Psoas muscle (tissue), 8 donors: ENCODE measurements at regions of chr15 and their contacts with region 1.

Region 1: DNA sequence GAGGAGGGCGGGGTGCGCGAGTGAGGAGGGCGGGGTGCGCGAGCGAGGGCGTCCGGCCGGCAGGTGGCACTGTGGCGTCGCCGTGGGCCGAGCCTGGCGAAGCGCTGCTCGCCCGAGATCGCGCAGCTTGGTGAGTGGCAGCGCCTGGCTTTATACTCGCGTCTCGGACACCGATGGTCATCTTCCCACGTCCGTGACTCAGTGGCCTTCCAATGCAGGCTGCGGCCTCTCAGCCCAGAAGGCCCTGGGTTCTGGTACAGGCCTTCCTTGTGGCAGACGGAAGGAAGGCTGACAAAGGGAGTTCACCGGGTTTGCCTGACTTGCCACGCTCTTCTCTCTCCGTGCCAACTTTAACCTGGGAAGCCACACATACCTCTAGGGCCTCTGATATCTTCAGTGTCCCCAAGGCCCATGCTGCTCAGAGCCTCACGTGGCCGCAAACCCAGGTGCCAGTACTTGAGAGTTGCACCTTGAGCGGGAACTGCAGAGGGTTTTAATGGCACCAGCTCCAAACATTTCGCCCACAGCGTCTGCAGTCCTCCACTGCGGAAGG is 195.3 kb upstream of the LYSMD4 start:
- DNase-seq: peak; percentile 76 to 93
- ATAC-seq: peak; percentile 88 to 98 (median 97)
- H3K4me3 ChIP-seq: peak overlapping the region; percentile 68
- H3K27ac ChIP-seq: peak overlapping the region; percentile 66
- H3K4me1 ChIP-seq: no peaks in the 10 kb centered on the region
- H3K27me3 ChIP-seq: no peaks in the 10 kb centered on the region
- CTCF ChIP-seq: peak; percentile 68

Region 2: DNA sequence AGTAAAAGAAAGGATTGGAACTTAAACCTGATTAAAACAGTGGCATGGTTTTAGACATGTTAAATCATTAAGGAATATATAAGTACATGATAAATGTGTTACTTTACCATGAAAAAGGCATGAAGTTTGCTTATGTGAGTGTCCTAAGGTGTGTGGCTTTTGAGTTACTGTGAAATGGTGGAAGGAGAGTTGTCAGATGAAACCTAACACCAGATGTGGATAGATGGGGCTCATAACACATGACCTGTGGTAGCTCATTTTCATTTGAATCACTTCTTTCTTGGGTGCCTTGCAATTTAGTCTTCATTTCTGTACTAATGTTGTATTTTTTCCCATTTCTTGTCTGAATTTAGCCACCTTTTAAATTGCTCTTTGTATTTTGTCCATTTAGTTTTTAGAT is 349.7 kb before region 1 on chr15:
- intact Hi-C with region 1: no loop called
- DNase-seq: no peak
- ATAC-seq: peak; percentile 40 to 70 (median 56)
- H3K4me3 ChIP-seq: peak overlapping the region; percentile 23
- H3K27ac ChIP-seq: peak overlapping the region; percentile 62
- H3K4me1 ChIP-seq: peaks cover 82% of the 10 kb centered on the region
- H3K27me3 ChIP-seq: no peaks in the 10 kb centered on the region
- CTCF ChIP-seq: no peak

Region 3: GRCh38 chr15:99863550-99864198 is 64.8 kb before region 1 on chr15:
- intact Hi-C with region 1: loop called in 1 of 2 experiments (anchors 10 kb)
- DNase-seq: no peak
- ATAC-seq: no peak
- H3K4me3 ChIP-seq: no peak overlapping the region
- H3K27ac ChIP-seq: no peak overlapping the region
- H3K4me1 ChIP-seq: no peaks in the 10 kb centered on the region
- H3K27me3 ChIP-seq: no peaks in the 10 kb centered on the region
- CTCF ChIP-seq: no peak

Region 4: DNA sequence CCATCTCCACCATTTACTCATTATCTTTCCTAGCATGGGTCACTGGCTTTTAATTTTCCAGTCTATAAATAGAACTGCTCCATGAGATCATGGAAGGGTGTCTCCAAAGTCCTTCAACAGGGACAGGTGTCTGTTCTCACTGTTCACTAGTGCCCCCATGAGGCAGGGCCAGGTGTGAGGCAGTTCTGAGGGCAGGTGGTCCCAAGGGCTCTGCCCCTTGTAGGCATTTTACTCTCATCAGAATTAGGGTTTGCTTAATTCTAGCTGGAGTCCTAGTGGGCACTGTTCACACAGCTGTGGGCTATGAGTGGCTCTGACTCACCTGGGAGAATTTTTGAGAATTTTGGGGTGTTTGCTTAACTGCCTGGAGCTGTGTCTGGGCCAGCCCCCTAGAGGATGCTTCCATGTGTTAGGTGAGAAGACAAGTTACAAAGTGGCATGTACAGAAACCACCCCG is 52.7 kb after region 1 on chr15:
- intact Hi-C with region 1: loop called in 1 of 2 experiments (anchors 5 kb)
- DNase-seq: peak in 1 of 2 donors; percentile 31
- ATAC-seq: peak; percentile 36 to 73 (median 67)
- H3K4me3 ChIP-seq: no peak overlapping the region
- H3K27ac ChIP-seq: no peak overlapping the region
- H3K4me1 ChIP-seq: no peaks in the 10 kb centered on the region
- H3K27me3 ChIP-seq: no peaks in the 10 kb centered on the region
- CTCF ChIP-seq: peak; percentile 43

Region 5: DNA sequence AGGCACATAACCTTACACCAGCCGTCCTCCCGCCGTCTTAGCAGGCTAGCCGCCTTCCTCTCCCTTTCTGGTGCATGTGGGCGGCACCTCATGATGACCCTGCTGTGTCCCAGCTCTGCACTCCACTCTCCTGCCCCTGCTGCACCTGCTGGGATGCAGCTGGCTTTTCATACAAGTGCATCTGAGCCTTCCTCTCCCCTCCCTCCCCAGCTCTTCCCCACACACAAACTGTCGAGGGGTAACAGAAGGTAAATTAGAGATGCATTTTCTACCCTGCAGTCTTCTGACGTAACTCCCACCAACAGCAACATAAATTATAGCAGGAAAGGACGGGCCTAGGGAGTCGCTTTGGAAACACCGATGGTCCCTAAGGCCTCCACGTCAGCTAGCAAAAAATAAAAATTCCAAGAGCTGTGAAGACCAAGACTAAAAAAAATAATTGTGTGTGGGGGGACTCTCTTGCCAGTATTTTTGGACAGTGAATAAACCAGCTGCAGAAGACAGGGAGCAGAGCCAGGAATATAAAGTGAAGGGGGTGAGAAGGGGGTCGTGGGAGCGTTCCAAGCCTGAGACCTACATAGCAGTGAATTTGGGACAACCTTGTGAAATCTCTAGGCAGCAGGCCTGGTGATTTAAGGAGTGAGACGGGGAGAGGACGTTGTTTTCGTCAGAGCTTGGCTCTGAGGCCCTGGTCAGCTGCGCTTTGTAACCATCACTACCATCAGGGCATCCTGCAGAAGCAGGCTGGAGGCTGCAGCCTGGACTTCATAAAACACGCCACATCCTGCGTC is 197.1 kb after region 1 on chr15:
- intact Hi-C with region 1: loop called (anchors 5 to 10 kb)
- DNase-seq: peak; percentile 80 to 82
- ATAC-seq: peak; percentile 46 to 80 (median 71)
- H3K4me3 ChIP-seq: no peak overlapping the region
- H3K27ac ChIP-seq: peak overlapping the region; percentile 46
- H3K4me1 ChIP-seq: no peaks in the 10 kb centered on the region
- H3K27me3 ChIP-seq: no peaks in the 10 kb centered on the region
- CTCF ChIP-seq: no peak

Region 6: GRCh38 chr15:100131321-100132224 is 203.1 kb after region 1 on chr15:
- intact Hi-C with region 1: loop called (anchors 5 to 10 kb)
- DNase-seq: no peak
- ATAC-seq: peak; percentile 25 to 86 (median 64)
- H3K4me3 ChIP-seq: peak overlapping the region; percentile 20
- H3K27ac ChIP-seq: no peak overlapping the region
- H3K4me1 ChIP-seq: no peaks in the 10 kb centered on the region
- H3K27me3 ChIP-seq: no peaks in the 10 kb centered on the region
- CTCF ChIP-seq: peak; percentile 47

Region 7: GRCh38 chr15:100338971-100339444 is 410.5 kb after region 1 on chr15:
- intact Hi-C with region 1: loop called (anchors 2 to 5 kb)
- DNase-seq: peak; percentile 49 to 73
- ATAC-seq: peak; percentile 31 to 68 (median 44)
- H3K4me3 ChIP-seq: peak overlapping the region; percentile 95
- H3K27ac ChIP-seq: no peak overlapping the region
- H3K4me1 ChIP-seq: peaks cover 9% of the 10 kb centered on the region
- H3K27me3 ChIP-seq: no peaks in the 10 kb centered on the region
- CTCF ChIP-seq: peak; percentile 64

Region 8: DNA sequence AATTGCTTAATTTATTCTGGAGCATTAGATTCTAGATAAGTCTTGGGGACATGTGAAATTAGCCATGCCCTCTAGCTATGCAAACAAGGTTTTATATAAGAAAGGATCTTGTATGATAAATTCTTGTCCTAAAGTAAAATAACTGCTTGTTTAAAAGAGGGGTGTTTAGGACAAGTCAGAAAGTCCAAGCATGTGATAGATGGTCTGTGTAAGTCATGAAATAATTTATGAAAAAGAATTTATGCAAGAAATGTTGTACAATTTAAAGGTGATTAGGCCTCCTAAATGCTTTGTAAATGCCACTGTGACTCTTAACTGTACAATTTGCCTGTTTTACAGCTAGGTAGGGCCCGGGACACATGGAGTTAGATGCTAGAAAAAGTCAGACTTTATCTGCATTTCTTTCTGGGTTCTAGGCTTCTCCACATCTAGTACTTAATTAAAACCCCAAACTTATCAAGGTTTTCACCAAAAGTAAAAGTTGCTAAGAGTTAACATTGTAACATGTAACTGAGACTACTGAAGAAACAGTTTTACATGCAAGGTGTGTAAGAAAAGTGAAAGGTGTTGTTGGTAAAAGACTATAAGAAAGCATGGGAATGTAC is 660.2 kb after region 1 on chr15:
- intact Hi-C with region 1: loop called in 1 of 2 experiments (anchors 10 kb)
- DNase-seq: no peak
- ATAC-seq: no peak
- H3K4me3 ChIP-seq: no peak overlapping the region
- H3K27ac ChIP-seq: no peak overlapping the region
- H3K4me1 ChIP-seq: peaks cover 3% of the 10 kb centered on the region
- H3K27me3 ChIP-seq: no peaks in the 10 kb centered on the region
- CTCF ChIP-seq: no peak